Adrenal gland (tissue), 19 donors: ENCODE measurements at regions of chr4 and their contacts with region 1.

Region 1: GRCh38 chr4:73019462-73020047 is 50.0 kb downstream of the COX18 start:
- DNase-seq: peak in 2 of 7 donors; percentile 16 to 29
- H3K4me3 ChIP-seq: no peak overlapping the region
- H3K27ac ChIP-seq: no peak overlapping the region
- H3K4me1 ChIP-seq: no peaks in the 10 kb centered on the region
- H3K27me3 ChIP-seq: no peaks in the 10 kb centered on the region
- CTCF ChIP-seq: peak; percentile 52 to 84 (median 67)
- POLR2A ChIP-seq: no peak

Region 2: DNA sequence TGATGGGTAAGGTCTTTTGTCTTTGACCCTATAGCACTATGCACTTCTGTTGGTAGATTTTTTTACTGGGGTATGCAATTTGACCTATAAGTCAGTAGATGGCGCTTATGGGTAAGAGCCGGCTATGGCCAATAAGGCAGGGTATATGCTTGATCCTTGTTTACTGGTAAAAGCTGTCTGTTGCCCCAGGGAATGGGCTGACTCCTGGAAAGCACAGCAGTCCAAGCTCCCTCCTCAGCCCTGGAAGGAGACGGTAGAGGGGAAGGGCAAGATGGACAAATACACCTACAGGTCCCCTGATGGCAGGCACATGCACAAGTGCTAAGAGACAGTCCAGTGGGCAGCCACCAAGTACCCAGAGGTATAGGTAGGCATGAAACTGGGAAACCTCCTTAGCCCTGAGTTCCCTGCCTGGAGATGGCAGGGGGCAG is 514.2 kb before region 1 on chr4:
- intact Hi-C with region 1: loop called in 1 of 2 experiments (anchors 5 kb)
- DNase-seq: peak in 6 of 7 donors; percentile 19 to 59 (median 30)
- H3K4me3 ChIP-seq: no peak overlapping the region
- H3K27ac ChIP-seq: no peak overlapping the region
- H3K4me1 ChIP-seq: no peaks in the 10 kb centered on the region
- H3K27me3 ChIP-seq: no peaks in the 10 kb centered on the region
- CTCF ChIP-seq: peak; percentile 59 to 74 (median 66)
- POLR2A ChIP-seq: no peak

Region 3: GRCh38 chr4:72701987-72702819 is 317.4 kb before region 1 on chr4:
- intact Hi-C with region 1: loop called (anchors 10 kb)
- DNase-seq: peak; percentile 15 to 55 (median 37)
- H3K4me3 ChIP-seq: peak overlapping the region in 2 of 4 donors; percentile 2 to 59
- H3K27ac ChIP-seq: no peak overlapping the region
- H3K4me1 ChIP-seq: no peaks in the 10 kb centered on the region
- H3K27me3 ChIP-seq: no peaks in the 10 kb centered on the region
- CTCF ChIP-seq: peak; percentile 27 to 61 (median 50)
- POLR2A ChIP-seq: no peak